ENCODE measurements at regions of chr1 and their contacts with region 1.

Region 1: GRCh38 chr1:204806943-204807687 is 63.5 kb upstream of the NFASC start:
- DNase-seq: no peak
- H3K4me3 ChIP-seq: peak overlapping the region; percentile 46
- H3K27me3 ChIP-seq: peaks cover 8% of the 10 kb centered on the region
- CTCF ChIP-seq: peak; percentile 93

Region 2: GRCh38 chr1:204446370-204447111 is 360.6 kb before region 1 on chr1:
- CTCF ChIA-PET with region 1: interaction called, 16 read pairs
- POLR2A ChIA-PET with region 1: no interaction called
- DNase-seq: no peak
- H3K4me3 ChIP-seq: no peak overlapping the region
- H3K27me3 ChIP-seq: no peaks in the 10 kb centered on the region
- CTCF ChIP-seq: peak; percentile 78

Region 3: GRCh38 chr1:204685236-204686006 is 121.7 kb before region 1 on chr1 and contains the start of gene LRRN2:
- CTCF ChIA-PET with region 1: interaction called, 15 read pairs
- POLR2A ChIA-PET with region 1: no interaction called
- DNase-seq: no peak
- H3K4me3 ChIP-seq: no peak within 1 kb of the TSS
- H3K27me3 ChIP-seq: peaks cover 33% of the 10 kb centered on the region
- CTCF ChIP-seq: no peak
- polyA plus RNA-seq, gene LRRN2: not detected in 2 replicates

Region 4: DNA sequence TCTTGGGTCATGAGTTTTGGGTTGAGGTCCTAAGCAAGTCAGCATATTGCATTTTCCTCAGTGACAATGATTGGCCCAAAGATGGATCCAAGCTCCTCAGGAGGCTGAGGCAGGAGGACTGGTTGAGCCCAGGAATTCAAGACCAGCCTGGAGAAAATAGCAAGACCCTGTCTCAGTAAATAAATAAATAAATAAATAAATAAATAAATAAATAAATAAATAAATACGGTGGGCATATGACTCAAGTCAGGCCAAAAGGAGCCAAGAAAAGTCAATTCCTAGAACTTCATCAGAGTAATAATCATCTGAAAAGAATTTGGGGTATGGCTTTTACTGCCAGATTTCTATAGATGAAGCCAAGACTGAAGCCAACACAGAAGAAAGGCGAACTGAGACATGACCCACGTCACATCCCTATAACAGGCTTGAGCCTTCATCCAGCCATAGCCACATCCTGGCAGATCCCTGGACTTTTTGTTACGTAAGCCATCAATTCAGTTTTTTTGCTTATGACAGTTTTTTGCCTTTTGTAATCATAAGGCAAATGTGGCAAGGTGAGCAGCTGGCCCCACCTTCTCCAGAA is 24.9 kb before region 1 on chr1:
- CTCF ChIA-PET with region 1: interaction called, 164 read pairs
- POLR2A ChIA-PET with region 1: no interaction called
- DNase-seq: no peak
- H3K4me3 ChIP-seq: no peak overlapping the region
- H3K27me3 ChIP-seq: 0 out of 2 replicates have a peak, but pooled peaks cover 5% of the 10 kb centered on the region
- CTCF ChIP-seq: no peak

Region 5: DNA sequence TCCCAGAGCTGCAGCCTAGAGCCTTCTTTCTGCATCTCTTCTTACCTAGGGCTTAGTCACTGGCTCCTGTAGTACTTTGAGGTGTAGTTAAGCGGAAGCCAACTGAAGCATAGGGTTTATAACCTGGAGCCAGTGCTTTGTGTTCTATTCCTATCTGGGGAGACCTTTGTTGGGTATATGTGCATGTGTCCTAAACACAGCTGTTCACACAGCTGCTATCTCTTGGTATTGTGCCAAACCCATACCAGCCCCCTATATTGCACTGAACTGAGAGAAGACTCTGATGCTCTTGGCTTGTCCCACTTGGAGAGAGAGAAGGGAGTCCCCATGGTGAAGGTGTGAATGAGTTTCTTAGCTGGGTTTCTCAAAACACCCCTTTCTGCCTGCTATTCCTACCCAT is 46.3 kb after region 1 on chr1:
- CTCF ChIA-PET with region 1: interaction called, 13 read pairs
- POLR2A ChIA-PET with region 1: no interaction called
- DNase-seq: no peak
- H3K4me3 ChIP-seq: no peak overlapping the region
- H3K27me3 ChIP-seq: no peaks in the 10 kb centered on the region
- CTCF ChIP-seq: no peak

Region 6: GRCh38 chr1:204950353-204951001 is 143.4 kb after region 1 on chr1:
- CTCF ChIA-PET with region 1: interaction called, 231 read pairs
- POLR2A ChIA-PET with region 1: no interaction called
- DNase-seq: no peak
- H3K4me3 ChIP-seq: no peak overlapping the region
- H3K27me3 ChIP-seq: no peaks in the 10 kb centered on the region
- CTCF ChIP-seq: no peak

Measured in BJ (cell line).